Spleen (tissue), 13 donors: ENCODE measurements at regions of chrX and their contacts with region 1.

Region 1: GRCh38 chrX:2498781-2499302 is 1.9 kb downstream of the DHRSX start:
- DNase-seq: peak; percentile 58
- H3K4me3 ChIP-seq: peak overlapping the region in 5 of 8 donors; percentile 74 to 94 (median 84)
- H3K27ac ChIP-seq: peak overlapping the region in 7 of 8 donors; percentile 73 to 94 (median 92)
- H3K4me1 ChIP-seq: peaks cover 26 to 59% (median 41%) of the 10 kb centered on the region in 6 donors
- H3K27me3 ChIP-seq: no peaks in the 10 kb centered on the region
- CTCF ChIP-seq: no peak
- POLR2A ChIP-seq: no peak

Region 2: DNA sequence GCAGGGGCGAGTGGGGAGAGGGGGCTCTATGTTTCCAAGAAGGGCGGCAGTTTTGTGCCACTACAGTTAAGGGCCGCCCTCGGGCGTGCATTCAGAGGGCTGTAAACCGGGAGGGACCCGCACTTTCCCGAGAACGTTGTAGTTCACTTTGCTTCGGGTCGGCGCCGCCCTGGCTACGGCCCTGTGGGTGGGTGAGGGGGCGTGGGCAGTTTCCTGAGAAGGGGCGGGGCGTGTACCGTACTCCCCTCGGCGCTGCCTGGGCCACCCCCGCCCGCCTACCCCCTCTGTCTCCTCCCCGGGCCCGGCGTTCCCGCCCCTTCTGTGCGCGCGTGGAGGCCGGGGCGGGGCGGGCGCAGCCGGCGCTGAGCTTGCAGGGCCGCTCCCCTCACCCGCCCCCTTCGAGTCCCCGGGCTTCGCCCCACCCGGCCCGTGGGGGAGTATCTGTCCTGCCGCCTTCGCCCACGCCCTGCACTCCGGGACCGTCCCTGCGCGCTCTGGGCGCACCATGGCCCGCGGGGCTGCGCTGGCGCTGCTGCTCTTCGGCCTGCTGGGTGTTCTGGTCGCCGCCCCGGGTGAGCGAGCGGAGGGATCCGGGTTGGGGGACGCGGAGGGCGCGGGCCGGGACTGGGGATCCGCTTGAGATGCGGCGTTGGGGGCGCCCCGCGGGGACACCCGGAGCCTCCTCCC is 192.2 kb after region 1 on chrX and contains the start of gene CD99:
- intact Hi-C with region 1: loop called (anchors 10 kb)
- DNase-seq: peak; percentile 97
- H3K4me3 ChIP-seq: peak within 1 kb of the TSS; percentile 67 to 96 (median 90)
- H3K27ac ChIP-seq: peak within 1 kb of the TSS; percentile 69 to 88 (median 84)
- H3K4me1 ChIP-seq: peaks cover 17 to 56% (median 47%) of the 10 kb centered on the region in 6 donors
- H3K27me3 ChIP-seq: no peaks in the 10 kb centered on the region
- CTCF ChIP-seq: no peak
- POLR2A ChIP-seq: peak in 2 of 3 donors; percentile 50 to 73
- total RNA-seq, gene CD99: 109 to 316 (median 180) TPM